Lower leg skin (tissue), 4 donors: ENCODE measurements at regions of chr10 and their contacts with region 1.

Region 1: DNA sequence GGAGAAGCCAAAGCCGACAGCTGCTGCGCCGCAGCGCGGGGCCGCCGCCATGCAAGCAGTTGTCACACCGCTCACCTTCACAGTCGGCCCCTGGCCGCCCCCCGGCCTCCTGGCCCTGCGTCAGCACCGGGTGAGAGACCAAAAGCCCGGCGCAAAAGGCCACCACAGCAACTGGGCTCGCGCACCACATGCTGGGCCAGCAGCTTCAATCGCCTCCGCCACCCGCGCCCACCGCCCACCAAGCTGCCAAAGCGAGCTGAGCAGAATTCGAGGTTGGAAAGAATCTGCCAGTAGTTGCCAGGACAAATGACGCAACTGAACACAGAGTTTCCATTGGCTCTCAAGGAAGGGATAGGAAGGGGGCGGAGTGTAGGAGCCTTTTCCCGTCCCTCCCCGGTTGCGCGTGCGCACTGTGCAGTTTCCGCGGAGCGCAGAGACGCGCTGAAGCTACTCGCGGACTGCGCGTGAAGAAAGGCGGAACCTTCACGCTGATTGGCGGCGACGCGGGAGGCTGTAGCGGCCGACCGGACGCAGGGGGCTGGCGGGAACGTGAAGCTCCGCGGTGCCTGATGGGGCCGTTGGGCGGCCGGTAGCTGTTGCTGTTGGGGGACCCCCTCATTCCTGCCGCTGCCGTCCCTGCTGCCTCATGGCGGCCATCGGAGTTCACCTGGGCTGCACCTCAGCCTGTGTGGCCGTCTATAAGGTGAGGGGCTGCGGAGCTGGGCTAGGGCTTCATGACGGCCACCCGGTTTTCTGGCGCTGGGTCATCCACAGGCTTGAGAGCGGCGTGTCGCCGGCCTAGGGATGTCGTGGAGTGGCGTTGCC is at the starts of genes CDNF, HSPA14 and MSANTD7:
- DNase-seq: peak; percentile 99 to 100
- H3K4me3 ChIP-seq: peak within 1 kb of the TSS; percentile 93
- CTCF ChIP-seq: no peak
- POLR2A ChIP-seq: no peak
- total RNA-seq, gene CDNF: 1.9 to 9.8 (median 3.9) TPM
- total RNA-seq, gene HSPA14: 3.6 to 9.2 (median 5.9) TPM
- total RNA-seq, gene MSANTD7: 8.7 to 12.2 (median 10.7) TPM

Region 2: DNA sequence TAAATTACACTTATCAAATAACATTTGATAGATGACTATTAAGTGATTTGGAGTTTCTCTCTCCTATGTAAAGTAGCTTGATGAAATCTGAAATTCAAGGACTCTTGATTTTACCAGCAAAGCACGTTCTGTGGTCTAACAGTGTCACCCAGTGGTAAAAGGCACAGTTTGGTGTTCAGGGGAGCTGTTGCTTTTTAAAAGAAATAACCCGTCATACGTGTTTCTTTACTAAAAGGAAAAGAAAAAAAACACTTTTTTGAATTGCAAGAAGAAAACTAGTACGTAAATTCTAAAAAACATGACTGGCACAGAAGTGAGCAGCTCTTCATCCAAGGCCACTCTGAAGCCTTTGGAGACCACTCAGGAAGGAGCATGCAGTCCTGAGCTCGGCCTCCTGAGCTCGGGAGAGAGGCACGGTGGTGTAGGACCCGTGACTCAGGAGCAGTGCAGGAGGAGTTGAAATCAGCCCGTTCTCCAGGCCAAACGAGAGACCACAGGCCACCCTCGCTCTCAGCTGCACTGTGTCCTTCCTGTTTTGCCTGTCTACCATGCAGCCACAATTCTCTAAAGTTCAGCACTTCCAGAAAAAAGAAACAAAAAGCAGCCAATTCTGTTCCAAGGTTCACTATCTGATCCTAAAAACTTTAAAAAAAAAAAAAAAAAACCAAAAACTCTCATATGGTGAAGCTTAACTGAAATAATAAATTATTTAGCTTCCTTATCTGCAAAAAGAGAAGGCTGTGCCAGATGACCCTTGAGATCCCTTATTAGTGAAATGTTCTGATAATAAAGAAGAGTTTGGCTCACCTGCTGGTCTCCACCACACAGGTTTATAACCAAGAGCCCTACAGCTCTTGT is 294.7 kb before region 1 on chr10:
- intact Hi-C with region 1: loop called (anchors 10 kb)
- DNase-seq: no peak
- H3K4me3 ChIP-seq: no peak overlapping the region
- CTCF ChIP-seq: no peak
- POLR2A ChIP-seq: no peak

Region 3: DNA sequence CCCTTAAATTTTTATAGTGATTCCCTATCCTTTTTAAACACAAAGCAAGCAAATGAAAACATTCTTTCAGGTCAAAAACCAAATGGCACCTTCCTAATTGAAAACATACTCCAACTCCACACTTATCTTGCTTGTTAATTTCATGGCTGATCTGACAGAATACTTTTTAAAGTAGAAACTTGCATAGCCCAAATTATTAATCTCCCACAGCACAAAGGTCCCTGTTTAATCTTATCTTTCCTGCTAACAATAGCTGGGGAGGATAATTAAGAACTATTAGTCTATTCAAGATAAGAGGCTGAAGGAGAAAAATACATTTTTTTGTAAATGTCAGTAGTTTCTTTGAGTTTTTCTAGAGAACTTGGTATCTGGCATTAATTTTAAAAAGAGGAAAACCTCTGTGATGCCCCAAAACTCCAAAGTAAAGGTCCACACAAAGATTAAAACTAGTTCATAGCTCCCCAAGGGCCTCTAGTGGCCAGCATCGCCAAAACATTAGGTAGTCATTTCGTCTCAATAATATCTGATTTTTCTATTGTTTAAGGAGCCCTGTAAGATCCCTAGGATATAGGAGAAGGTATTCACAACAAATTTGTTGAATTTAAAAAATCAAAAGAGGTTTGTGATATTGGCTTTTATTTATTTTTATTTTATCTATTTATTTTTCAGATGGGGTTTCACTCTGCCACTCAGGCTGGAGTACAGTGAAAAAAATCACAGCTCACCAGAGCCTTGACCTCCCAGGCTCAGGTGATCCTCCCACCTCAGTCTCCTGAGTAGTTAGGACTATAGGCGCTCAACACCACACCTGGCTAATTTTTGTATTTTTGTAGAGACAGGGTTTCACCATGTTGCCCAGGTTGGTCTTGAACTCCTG is 14.9 kb before region 1 on chr10:
- intact Hi-C with region 1: no loop called
- DNase-seq: no peak
- H3K4me3 ChIP-seq: no peak overlapping the region
- CTCF ChIP-seq: no peak
- POLR2A ChIP-seq: no peak

Region 4: GRCh38 chr10:15168781-15169554 is 331.0 kb after region 1 on chr10:
- intact Hi-C with region 1: loop called (anchors 5 kb)
- DNase-seq: peak; percentile 94 to 99
- H3K4me3 ChIP-seq: no peak overlapping the region
- CTCF ChIP-seq: no peak
- POLR2A ChIP-seq: no peak